MCF 10A (cell line): ENCODE measurements at regions of chr17 and their contacts with region 1.

Region 1: DNA sequence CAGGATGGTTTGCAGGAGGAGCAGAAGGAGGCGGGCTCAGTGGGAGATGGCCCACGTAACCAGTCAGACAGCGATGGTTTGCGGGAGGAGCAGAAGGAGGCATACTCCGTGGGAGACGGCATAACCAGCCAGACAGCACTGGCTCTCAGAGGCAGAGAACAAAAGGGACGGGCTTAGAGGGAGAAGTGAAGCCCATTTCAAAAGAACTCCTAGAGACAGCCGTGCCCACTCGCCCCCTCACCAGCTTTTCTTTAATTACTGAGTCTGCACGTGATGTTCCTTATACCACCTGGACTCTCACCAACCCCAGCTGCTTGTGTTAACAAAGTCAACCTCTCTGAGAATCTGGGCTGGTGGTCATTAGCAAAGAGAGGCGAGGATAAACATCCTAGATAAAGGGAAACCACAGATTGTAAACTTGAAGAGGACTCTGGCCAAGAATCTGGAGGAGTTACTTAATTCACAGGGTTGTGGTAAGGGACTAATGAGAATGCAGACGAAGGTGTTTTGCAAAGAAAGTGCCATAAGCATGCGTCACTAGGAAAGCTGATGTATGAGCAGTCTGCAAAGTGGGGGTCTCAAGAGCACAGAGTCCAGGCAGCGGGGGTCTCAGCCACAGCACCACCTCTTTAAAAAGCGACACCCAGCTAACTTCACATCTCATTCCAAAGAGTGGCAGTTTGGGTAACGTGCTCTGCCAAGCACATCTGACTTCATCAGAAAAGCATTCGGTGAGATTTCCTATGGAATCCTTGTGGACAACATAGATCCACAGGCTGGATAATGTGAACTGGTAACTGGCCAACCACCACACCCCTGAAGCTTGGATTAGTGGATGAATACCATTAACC is 51.7 kb downstream of the NXN start:
- DNase-seq: peak; percentile 94
- H3K4me3 Mint-ChIP-seq: peak overlapping the region; percentile 70
- H3K27ac Mint-ChIP-seq: peak overlapping the region; percentile 95
- H3K4me1 Mint-ChIP-seq: peaks cover 49% of the 10 kb centered on the region
- H3K27me3 Mint-ChIP-seq: no peaks in the 10 kb centered on the region
- CTCF ChIP-seq: no peak

Region 2: GRCh38 chr17:760371-760770 is 167.5 kb before region 1 on chr17:
- CTCF ChIA-PET with region 1: no interaction called
- POLR2A ChIA-PET with region 1: no interaction called
- intact Hi-C with region 1: no loop called
- DNase-seq: no peak
- H3K4me3 Mint-ChIP-seq: no peak overlapping the region
- H3K27ac Mint-ChIP-seq: no peak overlapping the region
- H3K4me1 Mint-ChIP-seq: no peaks in the 10 kb centered on the region
- H3K27me3 Mint-ChIP-seq: no peaks in the 10 kb centered on the region
- CTCF ChIP-seq: no peak

Region 3: DNA sequence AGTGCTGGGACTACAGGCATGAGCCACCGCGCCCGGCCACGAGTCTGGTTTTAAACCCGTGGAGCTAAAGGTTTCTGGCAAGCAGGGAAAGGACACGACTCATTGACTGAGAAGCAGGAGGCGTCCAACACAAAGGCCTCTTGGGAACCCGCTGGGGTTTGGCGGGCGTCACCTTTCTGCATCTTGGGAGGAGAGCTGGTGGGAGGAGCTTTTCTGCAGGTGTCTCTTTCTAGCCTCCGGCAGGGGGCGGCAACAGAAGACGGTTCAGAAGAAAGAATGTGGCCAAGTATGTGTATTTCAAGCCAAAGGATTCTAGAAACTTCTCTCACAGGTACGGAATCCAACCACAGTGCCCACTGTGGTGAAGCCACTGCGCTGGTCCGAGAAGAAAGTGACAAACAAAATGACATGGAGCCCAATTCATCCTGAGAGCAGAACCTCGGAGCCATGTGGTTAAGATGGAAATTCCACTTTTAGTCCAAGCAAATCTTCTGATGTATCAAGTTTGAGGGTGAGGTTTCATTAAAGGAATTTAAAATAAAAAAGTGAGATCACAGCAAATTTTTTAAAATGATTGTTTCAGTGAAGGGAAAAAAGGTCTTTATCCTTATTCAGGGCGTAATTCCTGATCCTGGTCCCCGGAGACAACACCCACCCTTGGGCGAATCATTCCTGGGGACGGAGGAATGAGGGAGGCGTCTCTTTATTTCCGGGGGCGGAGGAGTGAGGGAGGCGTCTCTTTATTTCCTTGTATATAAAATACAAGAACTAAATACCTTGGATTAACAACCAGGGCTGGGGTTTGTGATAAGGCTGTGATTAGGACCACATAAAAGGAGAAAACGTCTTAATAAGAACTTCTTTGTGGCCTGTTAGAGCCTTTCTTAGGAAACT is 48.0 kb before region 1 on chr17:
- CTCF ChIA-PET with region 1: interaction called, 22 read pairs
- POLR2A ChIA-PET with region 1: interaction called, 25 read pairs
- intact Hi-C with region 1: loop called (anchors 1 kb)
- DNase-seq: peak; percentile 98
- H3K4me3 Mint-ChIP-seq: peak overlapping the region; percentile 66
- H3K27ac Mint-ChIP-seq: peak overlapping the region; percentile 91
- H3K4me1 Mint-ChIP-seq: peaks cover 34% of the 10 kb centered on the region
- H3K27me3 Mint-ChIP-seq: no peaks in the 10 kb centered on the region
- CTCF ChIP-seq: peak; percentile 59

Region 4: GRCh38 chr17:903981-904481 is 23.8 kb before region 1 on chr17:
- CTCF ChIA-PET with region 1: interaction called, 11 read pairs
- POLR2A ChIA-PET with region 1: interaction called, 86 read pairs
- intact Hi-C with region 1: no loop called
- DNase-seq: peak; percentile 90
- H3K4me3 Mint-ChIP-seq: peak overlapping the region; percentile 61
- H3K27ac Mint-ChIP-seq: peak overlapping the region; percentile 99
- H3K4me1 Mint-ChIP-seq: peaks cover 31% of the 10 kb centered on the region
- H3K27me3 Mint-ChIP-seq: no peaks in the 10 kb centered on the region
- CTCF ChIP-seq: no peak

Region 5: DNA sequence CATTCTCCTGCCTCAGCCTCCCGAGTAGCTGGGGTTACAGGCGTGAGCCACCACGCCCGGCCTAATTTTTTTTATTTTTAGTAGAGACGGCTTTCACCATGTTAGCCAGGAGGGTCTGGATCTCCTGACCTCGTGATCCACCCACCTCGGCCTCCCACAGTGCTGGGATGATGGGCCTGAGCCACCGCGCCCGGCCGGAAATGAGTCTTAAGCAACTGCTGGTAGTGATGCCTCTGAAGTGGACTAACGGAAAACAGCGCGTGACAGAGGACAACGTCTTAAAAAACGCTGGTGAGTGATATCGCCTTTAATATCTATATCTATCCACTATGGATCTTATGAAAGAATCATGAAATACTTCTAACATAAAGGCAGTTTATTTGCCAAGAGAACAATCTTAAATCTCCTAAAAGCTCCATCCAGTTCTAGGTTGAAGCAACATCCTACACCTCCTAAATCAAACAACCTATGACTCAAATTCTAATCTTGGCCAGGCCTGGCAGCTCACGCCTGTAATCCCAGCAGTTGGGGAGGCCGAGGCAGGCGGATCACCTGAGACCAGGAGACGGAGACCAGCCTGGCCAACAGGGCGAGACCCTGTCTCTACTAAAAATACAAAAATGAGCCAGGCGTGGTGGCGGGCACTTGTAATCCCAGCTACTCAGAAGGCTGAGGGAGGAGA is 18.1 kb before region 1 on chr17:
- CTCF ChIA-PET with region 1: interaction called, 6 read pairs
- POLR2A ChIA-PET with region 1: interaction called, 86 read pairs
- intact Hi-C with region 1: no loop called
- DNase-seq: peak; percentile 80
- H3K4me3 Mint-ChIP-seq: no peak overlapping the region
- H3K27ac Mint-ChIP-seq: no peak overlapping the region
- H3K4me1 Mint-ChIP-seq: peaks cover 8% of the 10 kb centered on the region
- H3K27me3 Mint-ChIP-seq: no peaks in the 10 kb centered on the region
- CTCF ChIP-seq: no peak

Region 6: DNA sequence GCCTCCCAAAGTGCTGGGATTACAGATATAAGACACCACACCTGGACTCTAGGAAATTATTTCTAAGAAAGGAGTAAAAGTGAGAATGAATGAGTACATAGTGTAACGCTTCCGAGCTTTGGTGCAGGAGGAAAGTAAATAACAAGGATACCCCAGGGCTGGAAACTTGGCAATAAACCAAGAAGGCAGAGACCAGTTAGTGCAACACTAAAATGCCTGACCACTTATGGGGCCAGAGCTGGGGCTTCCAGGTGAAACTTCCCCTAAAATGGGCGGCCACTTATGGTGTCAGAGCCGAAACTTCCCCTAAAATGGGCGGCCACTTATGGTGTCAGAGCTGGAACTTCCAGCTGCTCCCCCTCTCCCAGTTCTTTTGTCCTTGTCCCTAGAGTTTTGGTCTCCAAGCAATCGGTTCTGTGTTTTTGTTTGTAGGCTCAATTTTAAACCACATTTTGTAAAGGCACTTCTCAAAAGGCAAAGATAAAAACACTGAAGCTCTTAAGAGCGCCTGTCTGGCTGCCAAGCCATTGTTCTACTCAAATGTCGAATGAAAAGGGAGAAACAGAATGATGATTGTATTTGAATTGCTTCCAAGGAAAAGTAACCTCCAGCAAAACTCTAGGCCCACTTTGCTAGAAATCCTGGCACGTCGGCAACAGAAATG is 12.2 kb before region 1 on chr17:
- CTCF ChIA-PET with region 1: interaction called, 4 read pairs
- POLR2A ChIA-PET with region 1: interaction called, 29 read pairs
- intact Hi-C with region 1: no loop called
- DNase-seq: peak; percentile 80
- H3K4me3 Mint-ChIP-seq: no peak overlapping the region
- H3K27ac Mint-ChIP-seq: peak overlapping the region; percentile 75
- H3K4me1 Mint-ChIP-seq: peaks cover 11% of the 10 kb centered on the region
- H3K27me3 Mint-ChIP-seq: no peaks in the 10 kb centered on the region
- CTCF ChIP-seq: no peak

Region 7: DNA sequence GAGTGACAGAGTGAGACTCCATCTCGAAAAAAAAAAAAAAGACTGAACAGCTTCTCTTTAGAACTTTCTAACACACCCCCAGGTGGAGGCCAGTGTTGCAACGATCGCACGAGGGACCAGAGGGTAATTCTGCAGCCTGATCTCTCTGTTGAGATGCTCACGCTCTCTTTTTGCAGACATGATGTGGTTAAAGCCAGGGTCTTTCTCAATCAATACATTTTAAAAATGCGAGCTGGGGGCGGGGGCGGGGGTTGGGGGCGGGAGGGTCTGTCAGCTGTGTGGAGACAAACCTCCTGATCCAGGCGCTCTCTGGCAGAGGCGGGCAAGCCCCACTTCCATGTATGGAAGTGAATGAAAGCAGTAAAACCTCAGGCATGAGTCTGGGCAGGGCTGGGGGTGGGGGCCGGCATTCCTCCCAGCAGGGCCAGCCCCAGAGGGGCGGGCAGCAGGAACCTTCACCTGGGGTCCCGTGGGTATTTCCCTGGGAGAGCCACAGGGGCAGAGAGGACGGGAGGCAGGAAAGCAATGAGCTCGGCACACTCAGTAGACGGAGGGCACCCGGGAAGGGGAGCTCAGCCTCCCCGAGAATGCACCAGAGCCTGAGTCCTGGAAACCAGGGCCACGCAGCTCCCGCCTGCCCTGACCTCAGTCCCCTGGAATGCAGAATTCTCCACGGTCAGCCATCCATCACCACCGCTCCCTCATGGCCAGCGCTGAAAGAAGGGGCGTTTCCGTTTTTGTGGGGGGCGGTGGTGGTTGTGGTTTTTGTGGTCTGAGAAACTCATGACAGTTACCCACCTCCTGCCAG is 23.7 kb after region 1 on chr17:
- CTCF ChIA-PET with region 1: interaction called, 3 read pairs
- POLR2A ChIA-PET with region 1: interaction called, 14 read pairs
- intact Hi-C with region 1: no loop called
- DNase-seq: peak; percentile 31
- H3K4me3 Mint-ChIP-seq: peak overlapping the region; percentile 40
- H3K27ac Mint-ChIP-seq: peak overlapping the region; percentile 42
- H3K4me1 Mint-ChIP-seq: peaks cover 6% of the 10 kb centered on the region
- H3K27me3 Mint-ChIP-seq: no peaks in the 10 kb centered on the region
- CTCF ChIP-seq: no peak

Region 8: DNA sequence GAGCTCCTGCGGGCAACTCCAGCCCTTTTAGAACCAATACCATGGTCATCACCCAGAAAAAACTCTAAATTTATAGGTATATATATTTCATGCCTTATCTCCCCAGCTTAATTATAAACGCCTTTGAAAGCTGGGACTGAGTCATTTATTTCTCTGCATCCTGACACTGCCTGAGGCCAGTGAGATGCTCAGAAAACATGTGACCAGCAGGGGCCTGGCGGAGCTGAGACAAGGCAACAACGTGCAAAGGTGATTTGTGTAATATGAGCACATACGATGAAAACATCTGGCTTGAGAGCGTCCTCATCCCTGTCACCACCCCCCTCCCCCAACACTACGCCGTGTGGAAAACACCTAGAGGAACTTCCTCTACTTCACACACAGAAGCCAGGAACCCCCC is 29.1 kb after region 1 on chr17:
- CTCF ChIA-PET with region 1: interaction called, 3 read pairs
- POLR2A ChIA-PET with region 1: interaction called, 14 read pairs
- intact Hi-C with region 1: no loop called
- DNase-seq: peak; percentile 76
- H3K4me3 Mint-ChIP-seq: no peak overlapping the region
- H3K27ac Mint-ChIP-seq: peak overlapping the region; percentile 35
- H3K4me1 Mint-ChIP-seq: peaks cover 6% of the 10 kb centered on the region
- H3K27me3 Mint-ChIP-seq: no peaks in the 10 kb centered on the region
- CTCF ChIP-seq: no peak